CD4-positive, alpha-beta memory T cell (primary cell): ENCODE measurements at regions of chr1 and their contacts with region 1.

Region 1: GRCh38 chr1:184843732-184844495 is 89.3 kb upstream of the EDEM3 start:
- DNase-seq: peak; percentile 69 to 85 (median 75)
- H3K4me3 ChIP-seq: no peak overlapping the region
- H3K4me3 Mint-ChIP-seq: peak overlapping the region in 7 of 8 donors; percentile 7 to 82 (median 28)
- H3K27ac ChIP-seq: peak overlapping the region; percentile 24
- H3K27ac Mint-ChIP-seq: peak overlapping the region; percentile 78 to 98 (median 90)
- H3K4me1 ChIP-seq: peaks cover 54% of the 10 kb centered on the region
- H3K4me1 Mint-ChIP-seq: peaks cover 35 to 49% (median 40%) of the 10 kb centered on the region in 4 donors
- H3K27me3 ChIP-seq: no peaks in the 10 kb centered on the region
- H3K27me3 Mint-ChIP-seq: no peaks in the 10 kb centered on the region

Region 2: GRCh38 chr1:184892116-184892515 is 48.2 kb after region 1 on chr1:
- CTCF ChIA-PET with region 1: interaction called, 4 read pairs
- POLR2A ChIA-PET with region 1: interaction called, 4 read pairs
- intact Hi-C with region 1: loop called (anchors 1 kb)
- DNase-seq: peak; percentile 19 to 39 (median 29)
- H3K4me3 ChIP-seq: no peak overlapping the region
- H3K4me3 Mint-ChIP-seq: peak overlapping the region in 7 of 8 donors; percentile 49 to 71 (median 59)
- H3K27ac ChIP-seq: peak overlapping the region; percentile 52
- H3K27ac Mint-ChIP-seq: peak overlapping the region; percentile 74 to 95 (median 90)
- H3K4me1 ChIP-seq: peaks cover 64% of the 10 kb centered on the region
- H3K4me1 Mint-ChIP-seq: peaks cover 42 to 74% (median 58%) of the 10 kb centered on the region in 4 donors
- H3K27me3 ChIP-seq: no peaks in the 10 kb centered on the region
- H3K27me3 Mint-ChIP-seq: no peaks in the 10 kb centered on the region